Activated CD4-positive, alpha-beta memory T cell treated with anti-CD3 and anti-CD28 coated beads, Interleukin-2, amount 10 ng/mL, durations not matched to agents 7 days and 5 days (primary cell): ENCODE measurements at regions of chr5 and their contacts with region 1.

Region 1: DNA sequence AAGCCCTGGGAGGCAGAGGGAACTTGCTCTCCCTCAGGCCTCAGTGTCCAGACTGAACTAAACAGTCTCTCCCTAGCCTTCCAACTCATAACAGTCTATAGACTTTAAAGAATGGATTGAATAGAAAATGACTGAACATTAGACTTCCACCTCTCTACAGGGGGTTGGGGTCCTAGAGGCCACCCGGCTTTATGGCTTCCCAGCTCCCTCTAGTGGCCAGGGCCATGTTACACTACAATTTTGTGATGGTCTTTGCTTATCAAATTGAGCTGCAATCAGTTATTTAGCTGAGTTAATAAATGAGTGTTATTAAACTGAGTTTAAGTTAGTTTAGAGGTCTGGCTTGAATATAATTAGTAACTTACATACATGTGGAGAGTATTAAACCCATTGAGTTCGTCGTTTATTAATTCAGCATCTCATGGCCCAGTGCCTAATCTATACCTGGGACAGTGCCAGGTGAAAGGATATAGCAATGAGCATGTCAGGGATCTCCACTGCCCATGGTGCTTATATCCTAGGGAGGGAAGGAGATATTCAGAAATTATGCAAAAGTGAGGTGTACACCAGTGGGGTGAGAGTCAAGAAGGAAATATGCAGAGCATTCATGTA is 105.2 kb downstream of the SH3TC2 start:
- DNase-seq: peak; percentile 58
- H3K4me3 Mint-ChIP-seq: no peak overlapping the region
- H3K27ac Mint-ChIP-seq: no peak overlapping the region
- H3K4me1 Mint-ChIP-seq: no peaks in the 10 kb centered on the region
- H3K27me3 Mint-ChIP-seq: no peaks in the 10 kb centered on the region

Region 2: DNA sequence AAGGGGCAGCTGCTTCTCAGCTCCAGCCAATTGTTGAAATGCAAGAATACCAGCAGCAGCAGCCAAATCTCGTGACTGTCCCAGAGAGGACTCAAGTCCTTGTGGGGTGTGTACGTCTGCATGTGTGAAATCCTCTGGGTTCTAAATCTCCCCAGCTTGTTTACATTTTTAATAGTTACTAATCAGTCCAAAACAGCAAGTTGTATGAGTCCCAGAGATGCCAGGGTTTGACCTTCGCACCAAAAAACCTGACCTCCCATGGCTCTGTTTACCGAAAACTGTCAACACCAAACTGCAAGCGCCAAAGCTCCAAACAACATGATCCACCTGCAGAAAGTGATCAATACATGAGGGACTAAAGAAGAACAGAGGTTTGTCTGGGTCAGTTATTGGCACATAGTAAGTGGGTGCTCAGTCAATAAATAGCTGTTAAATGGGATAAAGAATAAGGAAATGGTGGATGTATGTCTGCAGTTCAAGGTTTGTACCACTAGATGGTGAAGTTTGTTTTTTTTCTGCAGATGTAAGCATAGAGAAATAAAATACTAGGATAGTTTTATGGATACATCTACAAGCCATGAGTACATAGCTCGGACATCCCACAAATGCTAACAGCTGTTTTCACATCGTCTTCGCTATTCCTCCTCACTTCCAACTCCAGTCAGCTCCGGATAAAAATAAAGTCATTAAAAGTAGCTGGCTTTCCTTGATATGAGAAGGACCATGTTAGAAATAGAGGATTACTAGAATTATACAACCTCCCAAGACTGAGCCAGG is 216.5 kb before region 1 on chr5:
- CTCF ChIA-PET with region 1: interaction called, 69 read pairs
- POLR2A ChIA-PET with region 1: no interaction called
- DNase-seq: no peak
- H3K4me3 Mint-ChIP-seq: no peak overlapping the region
- H3K27ac Mint-ChIP-seq: no peak overlapping the region
- H3K4me1 Mint-ChIP-seq: peaks cover 10% of the 10 kb centered on the region
- H3K27me3 Mint-ChIP-seq: peaks cover 9% of the 10 kb centered on the region

Region 3: DNA sequence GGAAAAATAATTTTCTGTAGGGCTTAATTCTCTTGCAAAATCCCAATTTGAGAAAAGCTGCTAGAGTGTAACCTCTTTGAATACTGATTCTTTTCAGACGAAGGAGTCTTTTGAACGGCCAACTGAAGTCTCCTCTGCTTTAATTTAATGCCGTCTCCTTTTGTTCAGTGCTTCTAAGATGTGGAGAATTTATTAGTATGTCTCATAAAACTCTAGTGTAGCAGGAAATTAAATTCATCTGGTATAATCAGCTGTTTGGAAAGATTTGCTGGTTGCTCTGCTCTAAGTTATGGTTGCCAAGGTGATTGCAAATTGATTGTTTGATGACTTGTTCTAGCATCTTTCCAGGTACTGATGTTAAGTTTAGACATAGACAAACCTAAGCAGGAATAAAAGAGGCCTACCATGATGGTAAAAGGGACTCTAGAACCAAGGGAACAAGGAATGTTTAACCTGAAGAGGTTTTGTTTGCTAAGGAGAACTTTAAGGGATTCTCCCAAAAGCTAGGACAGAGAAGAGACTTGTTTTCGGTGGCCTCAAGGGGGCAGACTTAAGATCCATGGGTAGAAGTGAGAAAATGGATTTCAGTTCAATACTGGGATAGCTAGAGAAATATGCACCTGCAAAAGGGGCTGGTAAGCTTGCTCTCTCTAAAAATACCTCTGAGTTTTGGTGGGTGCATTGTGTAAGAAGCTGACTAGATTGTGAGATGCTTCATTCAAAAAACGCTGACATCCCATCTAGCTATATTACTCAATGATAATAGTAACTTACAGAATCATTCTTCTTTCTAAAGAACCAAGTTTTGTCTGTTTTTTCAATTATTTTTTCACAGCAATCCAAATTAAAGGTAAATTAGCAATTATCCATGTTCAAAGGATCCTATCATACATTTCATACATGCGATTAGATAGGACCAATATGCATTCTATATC is 137.0 kb before region 1 on chr5:
- CTCF ChIA-PET with region 1: interaction called, 50 read pairs
- POLR2A ChIA-PET with region 1: no interaction called
- DNase-seq: no peak
- H3K4me3 Mint-ChIP-seq: no peak overlapping the region
- H3K27ac Mint-ChIP-seq: no peak overlapping the region
- H3K4me1 Mint-ChIP-seq: peaks cover 9% of the 10 kb centered on the region
- H3K27me3 Mint-ChIP-seq: peaks cover 28% of the 10 kb centered on the region

Region 4: DNA sequence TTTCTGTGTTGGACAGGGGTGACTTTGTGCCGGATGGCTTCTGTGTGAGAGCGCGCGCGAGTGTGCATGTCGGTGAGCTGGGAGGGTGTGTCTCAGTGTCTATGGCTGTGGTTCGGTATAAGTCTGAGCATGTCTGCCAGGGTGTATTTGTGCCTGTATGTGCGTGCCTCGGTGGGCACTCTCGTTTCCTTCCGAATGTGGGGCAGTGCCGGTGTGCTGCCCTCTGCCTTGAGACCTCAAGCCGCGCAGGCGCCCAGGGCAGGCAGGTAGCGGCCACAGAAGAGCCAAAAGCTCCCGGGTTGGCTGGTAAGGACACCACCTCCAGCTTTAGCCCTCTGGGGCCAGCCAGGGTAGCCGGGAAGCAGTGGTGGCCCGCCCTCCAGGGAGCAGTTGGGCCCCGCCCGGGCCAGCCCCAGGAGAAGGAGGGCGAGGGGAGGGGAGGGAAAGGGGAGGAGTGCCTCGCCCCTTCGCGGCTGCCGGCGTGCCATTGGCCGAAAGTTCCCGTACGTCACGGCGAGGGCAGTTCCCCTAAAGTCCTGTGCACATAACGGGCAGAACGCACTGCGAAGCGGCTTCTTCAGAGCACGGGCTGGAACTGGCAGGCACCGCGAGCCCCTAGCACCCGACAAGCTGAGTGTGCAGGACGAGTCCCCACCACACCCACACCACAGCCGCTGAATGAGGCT is 131.5 kb before region 1 on chr5 and contains the start of gene ADRB2:
- CTCF ChIA-PET with region 1: interaction called, 50 read pairs
- POLR2A ChIA-PET with region 1: interaction called, 3 read pairs
- DNase-seq: peak; percentile 95
- H3K4me3 Mint-ChIP-seq: peak within 1 kb of the TSS; percentile 78
- H3K27ac Mint-ChIP-seq: peak within 1 kb of the TSS; percentile 85
- H3K4me1 Mint-ChIP-seq: peaks cover 55% of the 10 kb centered on the region
- H3K27me3 Mint-ChIP-seq: peaks cover 36% of the 10 kb centered on the region
- total RNA-seq, gene ADRB2: 6.7 to 6.9 TPM

Region 5: DNA sequence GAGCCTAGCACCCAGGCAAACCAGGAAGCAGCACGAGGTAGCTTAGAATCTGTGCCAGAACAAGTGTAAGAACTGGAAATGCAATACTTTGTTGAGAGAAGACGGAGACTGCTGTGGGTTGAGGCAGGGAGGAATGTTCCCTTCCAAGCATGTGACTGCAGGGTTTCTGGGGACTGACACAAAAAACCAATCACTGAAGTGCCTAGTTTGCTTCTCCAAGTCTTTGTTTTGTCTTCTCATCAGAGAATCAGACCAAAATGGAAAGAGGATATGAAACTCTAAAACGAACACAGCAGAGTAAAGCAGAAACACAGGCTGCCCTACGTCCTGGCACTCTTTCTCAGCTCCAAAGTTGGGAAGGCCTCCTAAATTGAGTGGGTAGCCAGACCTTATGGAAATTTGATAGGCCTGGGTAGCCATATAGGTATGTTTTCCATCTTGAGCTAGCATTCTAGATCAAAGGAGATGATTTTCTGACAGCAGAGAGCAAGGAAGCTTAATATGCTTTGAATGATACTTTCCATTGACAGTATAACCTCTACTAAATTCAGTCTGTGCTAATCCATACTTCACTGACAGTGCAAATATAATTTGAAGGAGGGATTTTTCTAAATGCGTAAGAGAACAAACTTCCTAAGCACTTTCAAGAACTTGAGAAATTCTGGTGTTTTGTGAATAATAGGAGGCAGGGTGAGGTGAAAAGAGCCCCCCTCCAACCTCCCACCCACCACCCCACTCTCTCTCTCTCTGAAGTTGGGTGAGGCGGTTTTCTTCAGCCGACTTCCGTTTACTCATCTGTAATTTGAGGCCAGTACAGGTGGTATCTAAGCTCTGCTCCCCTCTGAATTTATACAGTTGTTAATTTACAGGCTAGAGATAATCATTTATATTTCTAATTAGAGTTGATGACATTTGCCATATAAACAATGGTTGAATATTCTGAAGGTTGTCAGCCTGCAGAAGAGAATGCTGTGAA is 125.8 kb before region 1 on chr5:
- CTCF ChIA-PET with region 1: interaction called, 18 read pairs
- POLR2A ChIA-PET with region 1: interaction called, 3 read pairs
- DNase-seq: no peak
- H3K4me3 Mint-ChIP-seq: peak overlapping the region; percentile 24
- H3K27ac Mint-ChIP-seq: no peak overlapping the region
- H3K4me1 Mint-ChIP-seq: peaks cover 91% of the 10 kb centered on the region
- H3K27me3 Mint-ChIP-seq: peaks cover 8% of the 10 kb centered on the region

Region 6: DNA sequence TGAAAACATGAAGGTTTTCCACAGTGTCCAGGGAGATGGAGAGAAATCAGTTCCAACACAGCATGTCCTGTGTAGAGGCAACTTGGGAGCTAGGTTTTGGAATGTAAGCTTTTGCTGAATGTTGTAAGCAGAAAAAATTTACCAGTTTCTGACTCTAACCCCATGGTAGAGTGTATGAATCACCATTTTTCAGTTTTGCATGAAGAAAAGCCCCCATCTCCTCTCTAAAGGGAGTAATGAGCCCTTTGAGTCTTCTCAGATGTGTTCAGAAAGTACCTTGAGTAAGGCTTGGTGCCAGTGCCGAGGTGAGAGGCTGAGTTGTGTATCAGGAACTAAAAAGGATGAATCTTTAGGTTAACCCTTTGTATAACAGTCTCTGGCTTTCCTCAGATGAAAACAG is 35.1 kb before region 1 on chr5:
- CTCF ChIA-PET with region 1: no interaction called
- POLR2A ChIA-PET with region 1: no interaction called
- DNase-seq: no peak
- H3K4me3 Mint-ChIP-seq: no peak overlapping the region
- H3K27ac Mint-ChIP-seq: no peak overlapping the region
- H3K4me1 Mint-ChIP-seq: no peaks in the 10 kb centered on the region
- H3K27me3 Mint-ChIP-seq: peaks cover 18% of the 10 kb centered on the region

Region 7: GRCh38 chr5:149035372-149035790 is 77.7 kb after region 1 on chr5:
- CTCF ChIA-PET with region 1: interaction called, 31 read pairs
- POLR2A ChIA-PET with region 1: no interaction called
- DNase-seq: peak; percentile 79
- H3K4me3 Mint-ChIP-seq: no peak overlapping the region
- H3K27ac Mint-ChIP-seq: no peak overlapping the region
- H3K4me1 Mint-ChIP-seq: peaks cover 42% of the 10 kb centered on the region
- H3K27me3 Mint-ChIP-seq: no peaks in the 10 kb centered on the region

Region 8: DNA sequence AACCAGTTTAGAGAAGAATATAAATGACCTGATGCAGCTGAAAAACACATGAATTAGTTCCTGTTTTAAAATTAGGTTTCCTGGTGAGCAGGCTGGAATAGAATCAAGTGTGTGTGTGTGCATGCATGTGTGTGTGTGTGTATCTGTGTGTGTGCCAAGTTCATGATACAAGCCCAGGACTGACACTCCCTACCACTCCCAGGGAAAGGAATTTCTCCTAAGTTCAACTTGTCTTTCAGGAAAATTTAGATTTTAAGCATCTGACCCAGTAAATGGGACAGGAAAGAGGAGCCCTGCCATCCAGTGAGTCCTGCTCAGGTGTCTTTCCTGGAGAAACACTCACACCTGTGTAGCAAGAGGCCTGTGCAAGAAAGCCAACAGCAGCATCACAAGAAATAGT is 116.4 kb after region 1 on chr5:
- CTCF ChIA-PET with region 1: no interaction called
- POLR2A ChIA-PET with region 1: no interaction called
- DNase-seq: no peak
- H3K4me3 Mint-ChIP-seq: no peak overlapping the region
- H3K27ac Mint-ChIP-seq: no peak overlapping the region
- H3K4me1 Mint-ChIP-seq: no peaks in the 10 kb centered on the region
- H3K27me3 Mint-ChIP-seq: peaks cover 11% of the 10 kb centered on the region